ENCODE measurements at regions of chr7 and their contacts with region 1.

Region 1: GRCh38 chr7:84194543-84195271 is at the start of gene SEMA3A:
- DNase-seq: peak; percentile 56
- H3K4me3 Mint-ChIP-seq: peak within 1 kb of the TSS; percentile 90
- H3K27ac Mint-ChIP-seq: peak within 1 kb of the TSS; percentile 79
- H3K4me1 Mint-ChIP-seq: peaks cover 34% of the 10 kb centered on the region
- H3K27me3 Mint-ChIP-seq: peaks cover 2% of the 10 kb centered on the region
- total RNA-seq, gene SEMA3A: 2.7 to 3.0 TPM

Region 2: GRCh38 chr7:84092207-84092606 is 102.5 kb before region 1 on chr7:
- CTCF ChIA-PET with region 1: no interaction called
- intact Hi-C with region 1: loop called (anchors 2 kb)
- DNase-seq: peak; percentile 49
- H3K4me3 Mint-ChIP-seq: peak overlapping the region; percentile 55
- H3K27ac Mint-ChIP-seq: peak overlapping the region; percentile 87
- H3K4me1 Mint-ChIP-seq: peaks cover 43% of the 10 kb centered on the region
- H3K27me3 Mint-ChIP-seq: no peaks in the 10 kb centered on the region

Region 3: GRCh38 chr7:84603545-84603944 is 408.8 kb after region 1 on chr7:
- CTCF ChIA-PET with region 1: no interaction called
- intact Hi-C with region 1: no loop called
- DNase-seq: no peak
- H3K4me3 Mint-ChIP-seq: no peak overlapping the region
- H3K27ac Mint-ChIP-seq: no peak overlapping the region
- H3K4me1 Mint-ChIP-seq: no peaks in the 10 kb centered on the region
- H3K27me3 Mint-ChIP-seq: no peaks in the 10 kb centered on the region